Astrocyte of the cerebellum (primary cell): ENCODE measurements at regions of chr1 and their contacts with region 1.

Region 1: GRCh38 chr1:18597160-18598042 is 33.2 kb upstream of the PAX7 start:
- DNase-seq: peak; percentile 5
- H3K4me3 ChIP-seq: no peak overlapping the region
- CTCF ChIP-seq: peak; percentile 96

Region 2: GRCh38 chr1:18668796-18669404 is 71.5 kb after region 1 on chr1:
- in situ Hi-C with region 1: no loop called
- DNase-seq: no peak
- H3K4me3 ChIP-seq: no peak overlapping the region
- CTCF ChIP-seq: no peak

Region 3: DNA sequence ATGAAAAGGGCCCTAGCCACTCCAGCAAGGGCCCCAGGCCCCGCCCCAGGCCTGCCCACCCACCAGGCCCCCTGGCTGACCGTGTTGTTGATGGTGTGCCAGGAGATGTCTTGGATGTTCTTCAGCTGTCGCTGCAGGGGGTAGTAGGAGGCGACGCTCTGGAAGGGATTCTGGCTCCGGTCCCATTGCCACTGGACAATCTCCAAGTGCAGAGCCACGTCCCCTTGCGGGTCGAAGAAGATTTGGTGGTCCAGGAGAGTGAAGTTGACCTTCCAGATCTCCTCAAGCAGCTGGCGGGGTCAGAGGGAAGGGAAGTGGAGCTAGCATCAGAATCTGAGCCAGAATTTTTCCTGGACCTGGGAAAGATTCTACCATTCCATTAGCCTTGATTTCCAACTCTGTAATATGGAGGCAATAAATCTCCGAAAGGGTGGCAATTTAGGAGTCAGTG is 251.9 kb after region 1 on chr1:
- in situ Hi-C with region 1: loop called (anchors 25 kb)
- DNase-seq: no peak
- H3K4me3 ChIP-seq: no peak overlapping the region
- CTCF ChIP-seq: no peak